ENCODE measurements at regions of chr18 and their contacts with region 1.

Region 1: DNA sequence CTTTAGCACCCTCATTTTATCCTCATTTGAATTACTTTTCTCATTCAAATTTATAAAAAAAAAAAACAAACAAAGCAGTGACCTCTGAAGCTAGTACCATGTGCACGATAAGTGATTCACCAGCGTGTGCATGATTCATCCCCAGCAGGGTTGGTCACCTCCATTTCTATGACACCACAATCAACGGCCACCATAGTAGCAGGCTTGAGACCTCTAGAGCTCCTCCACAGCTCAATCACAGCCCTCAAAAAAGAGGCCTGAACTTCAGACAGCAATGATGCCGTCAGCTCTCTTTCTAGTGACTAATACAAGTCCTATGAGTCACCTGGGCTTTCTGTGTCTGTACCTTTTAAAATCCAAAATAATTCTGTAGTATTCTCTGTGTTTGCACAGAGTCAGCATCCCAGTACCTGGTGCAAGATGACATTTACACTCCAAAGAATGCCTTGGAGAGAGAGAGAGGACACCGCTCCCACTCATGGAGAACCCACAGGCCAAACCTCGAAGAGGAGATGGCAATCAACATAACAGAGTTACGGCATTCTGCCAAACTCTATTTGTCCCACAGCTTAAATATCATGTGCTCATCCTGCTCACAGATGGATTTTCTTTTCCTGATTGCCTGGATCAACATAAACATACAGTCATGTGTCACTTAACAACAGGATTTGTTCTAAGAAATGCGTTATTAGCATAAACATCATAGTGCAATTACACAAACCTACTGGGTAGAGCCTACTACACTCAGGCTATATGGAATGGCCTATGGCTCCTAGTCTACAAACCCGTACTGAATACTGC is 58.7 kb downstream of the L3MBTL4 start:
- DNase-seq: peak; percentile 90
- ATAC-seq: peak; percentile 80
- H3K4me3 ChIP-seq: no peak overlapping the region; the same call in 1 of the 2 replicates
- H3K27ac ChIP-seq: peak overlapping the region; percentile 63
- H3K4me1 ChIP-seq: peaks cover 37% of the 10 kb centered on the region
- H3K27me3 ChIP-seq: no peaks in the 10 kb centered on the region
- CTCF ChIP-seq: no peak

Region 2: GRCh38 chr18:5895885-5896740 is 459.9 kb before region 1 on chr18:
- CTCF ChIA-PET with region 1: no interaction called
- POLR2A ChIA-PET with region 1: no interaction called
- intact Hi-C with region 1: loop called (anchors 5 kb)
- DNase-seq: peak; percentile 55
- ATAC-seq: peak; percentile 46
- H3K4me3 ChIP-seq: peak overlapping the region; percentile 68
- H3K27ac ChIP-seq: 0 out of 2 replicates have a peak overlapping the region, but pooled peaks have one; percentile 4
- H3K4me1 ChIP-seq: peaks cover 19% of the 10 kb centered on the region
- H3K27me3 ChIP-seq: peaks cover 33% of the 10 kb centered on the region
- CTCF ChIP-seq: no peak

Region 3: GRCh38 chr18:6327895-6328620 is 27.9 kb before region 1 on chr18:
- CTCF ChIA-PET with region 1: no interaction called
- POLR2A ChIA-PET with region 1: no interaction called
- intact Hi-C with region 1: loop called (anchors 1 kb)
- DNase-seq: peak; percentile 12
- ATAC-seq: peak; percentile 80
- H3K4me3 ChIP-seq: no peak overlapping the region
- H3K27ac ChIP-seq: no peak overlapping the region
- H3K4me1 ChIP-seq: peaks cover 10% of the 10 kb centered on the region
- H3K27me3 ChIP-seq: no peaks in the 10 kb centered on the region
- CTCF ChIP-seq: no peak

Region 4: GRCh38 chr18:6340121-6340520 is 15.9 kb before region 1 on chr18:
- CTCF ChIA-PET with region 1: no interaction called
- POLR2A ChIA-PET with region 1: no interaction called
- intact Hi-C with region 1: no loop called
- DNase-seq: no peak
- ATAC-seq: no peak
- H3K4me3 ChIP-seq: no peak overlapping the region
- H3K27ac ChIP-seq: no peak overlapping the region
- H3K4me1 ChIP-seq: no peaks in the 10 kb centered on the region
- H3K27me3 ChIP-seq: no peaks in the 10 kb centered on the region
- CTCF ChIP-seq: no peak

Region 5: DNA sequence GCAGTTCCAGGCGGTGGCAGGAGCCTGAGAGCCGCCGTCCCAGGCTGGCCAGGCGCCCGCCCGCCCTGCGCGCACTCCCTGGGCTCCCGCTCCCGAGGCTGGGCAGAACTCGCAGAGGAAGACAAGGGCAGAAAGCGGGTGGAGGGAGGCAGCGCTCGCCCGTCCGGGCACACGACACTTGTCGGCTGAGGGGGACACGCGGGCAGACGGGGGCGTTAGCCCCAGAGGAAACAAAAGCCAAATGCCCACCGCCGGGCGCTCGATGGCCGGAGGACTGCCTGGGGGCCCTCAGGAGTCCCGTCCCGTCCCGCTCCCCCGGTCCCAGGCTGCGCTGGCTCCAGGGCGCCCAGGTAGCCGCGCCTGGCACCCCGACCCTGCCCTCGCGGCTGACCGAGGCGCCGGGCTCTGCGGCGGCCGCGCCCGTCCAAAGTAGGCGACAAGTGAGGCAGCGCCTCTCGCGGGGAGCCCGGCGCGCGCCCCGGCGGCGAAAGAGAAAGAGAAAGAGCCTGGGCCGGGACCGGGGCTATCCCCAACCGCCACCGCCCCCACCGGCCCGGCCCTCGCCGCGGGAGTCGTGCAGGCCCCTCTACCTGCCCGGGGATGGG is 58.2 kb after region 1 on chr18:
- CTCF ChIA-PET with region 1: no interaction called
- POLR2A ChIA-PET with region 1: no interaction called
- intact Hi-C with region 1: loop called (anchors 5 kb)
- DNase-seq: peak; percentile 16
- ATAC-seq: peak; percentile 75
- H3K4me3 ChIP-seq: peak overlapping the region; percentile 64
- H3K27ac ChIP-seq: no peak overlapping the region
- H3K4me1 ChIP-seq: 0 out of 2 replicates have a peak, but pooled peaks cover 4% of the 10 kb centered on the region
- H3K27me3 ChIP-seq: peaks cover 9% of the 10 kb centered on the region; the same call in 1 of the 2 replicates
- CTCF ChIP-seq: no peak

Region 6: GRCh38 chr18:6741232-6741663 is 385.3 kb after region 1 on chr18:
- CTCF ChIA-PET with region 1: no interaction called
- POLR2A ChIA-PET with region 1: no interaction called
- intact Hi-C with region 1: loop called (anchors 10 kb)
- DNase-seq: peak; percentile 91
- ATAC-seq: peak; percentile 99
- H3K4me3 ChIP-seq: no peak overlapping the region; the same call in 1 of the 2 replicates
- H3K27ac ChIP-seq: peak overlapping the region; percentile 73
- H3K4me1 ChIP-seq: peaks cover 36% of the 10 kb centered on the region
- H3K27me3 ChIP-seq: no peaks in the 10 kb centered on the region
- CTCF ChIP-seq: no peak

Measured in PC-3 (cell line).